Activated B cell treated with CpG ODN at 0.5 μM for 24 hours (primary cell): ENCODE measurements at regions of chr14 and their contacts with region 1.

Region 1: GRCh38 chr14:68268197-68268596 is 448.6 kb downstream of the RAD51B start:
- DNase-seq: no peak
- ATAC-seq: peak; percentile 67
- H3K4me3 Mint-ChIP-seq: peak overlapping the region; percentile 63
- H3K27ac Mint-ChIP-seq: peak overlapping the region; percentile 93
- H3K4me1 Mint-ChIP-seq: peaks cover 93% of the 10 kb centered on the region
- H3K27me3 Mint-ChIP-seq: no peaks in the 10 kb centered on the region
- CTCF ChIP-seq: no peak

Region 2: DNA sequence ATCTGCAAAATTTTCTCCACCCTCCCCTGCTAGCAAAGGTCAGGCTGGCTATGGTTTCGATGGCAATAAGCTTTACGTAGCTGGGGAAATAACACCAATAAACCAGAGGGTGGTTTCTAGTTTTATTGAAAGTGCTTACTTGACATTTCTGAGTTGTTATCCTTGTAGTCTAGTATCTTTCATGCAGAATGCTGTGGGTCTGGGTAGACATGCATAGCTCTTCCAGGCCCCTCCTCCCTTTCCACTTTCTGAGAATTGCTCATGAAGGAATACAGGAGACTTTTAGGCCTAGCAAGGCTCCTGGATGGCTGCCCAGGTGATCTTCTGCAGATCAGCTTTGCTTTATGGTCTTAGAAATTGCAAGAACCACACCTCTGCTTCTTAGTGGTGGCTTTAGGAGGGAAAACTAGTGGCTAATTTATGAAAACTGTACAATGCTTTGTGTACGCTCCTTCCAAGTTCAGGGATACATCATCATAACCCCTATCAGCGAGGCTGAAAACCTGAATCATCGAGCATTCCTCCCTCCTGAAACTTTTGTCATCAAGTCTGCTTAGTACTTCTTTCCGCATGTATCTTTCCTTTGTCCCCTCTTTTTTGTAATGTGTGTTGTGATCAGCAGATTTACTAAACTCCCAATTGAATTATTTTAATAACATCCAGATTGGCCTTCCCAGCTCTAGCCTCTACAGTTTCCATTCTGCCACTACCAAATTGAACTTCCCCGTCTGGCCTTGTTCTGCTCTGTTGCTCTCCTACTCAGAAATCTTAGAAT is 24.4 kb after region 1 on chr14:
- CTCF ChIA-PET with region 1: no interaction called
- POLR2A ChIA-PET with region 1: interaction called, 375 read pairs
- intact Hi-C with region 1: no loop called
- DNase-seq: no peak
- ATAC-seq: peak; percentile 35
- H3K4me3 Mint-ChIP-seq: peak overlapping the region; percentile 59
- H3K27ac Mint-ChIP-seq: peak overlapping the region; percentile 96
- H3K4me1 Mint-ChIP-seq: peaks cover 77% of the 10 kb centered on the region
- H3K27me3 Mint-ChIP-seq: no peaks in the 10 kb centered on the region
- CTCF ChIP-seq: no peak

Region 3: GRCh38 chr14:68328509-68328908 is 60.3 kb after region 1 on chr14:
- CTCF ChIA-PET with region 1: no interaction called
- POLR2A ChIA-PET with region 1: interaction called, 9 read pairs
- intact Hi-C with region 1: loop called (anchors 5 kb)
- DNase-seq: no peak
- ATAC-seq: no peak
- H3K4me3 Mint-ChIP-seq: no peak overlapping the region
- H3K27ac Mint-ChIP-seq: peak overlapping the region; percentile 13
- H3K4me1 Mint-ChIP-seq: peaks cover 63% of the 10 kb centered on the region
- H3K27me3 Mint-ChIP-seq: no peaks in the 10 kb centered on the region
- CTCF ChIP-seq: no peak

Region 4: DNA sequence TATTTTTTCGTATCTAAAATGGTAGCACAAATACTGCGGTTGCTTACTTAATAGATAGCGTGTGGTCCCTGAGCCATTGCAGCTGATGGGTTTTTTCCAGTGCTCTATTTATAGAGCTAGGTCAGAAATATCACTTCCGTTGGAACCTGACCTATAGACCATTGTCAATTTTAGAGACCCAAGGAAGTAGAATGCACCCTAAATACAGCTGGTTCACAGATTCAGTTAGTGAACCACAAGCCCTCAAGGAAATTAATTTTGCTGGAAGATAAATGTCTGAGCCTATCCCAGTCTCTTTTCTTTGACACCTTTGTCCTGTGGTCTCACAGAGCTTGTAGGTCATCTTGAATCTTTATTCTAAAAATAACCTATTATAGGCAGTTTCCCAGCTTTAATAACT is 133.7 kb after region 1 on chr14:
- CTCF ChIA-PET with region 1: interaction called, 4 read pairs
- POLR2A ChIA-PET with region 1: interaction called, 59 read pairs
- intact Hi-C with region 1: loop called (anchors 1 kb)
- DNase-seq: no peak
- ATAC-seq: peak; percentile 59
- H3K4me3 Mint-ChIP-seq: peak overlapping the region; percentile 72
- H3K27ac Mint-ChIP-seq: peak overlapping the region; percentile 92
- H3K4me1 Mint-ChIP-seq: peaks cover 92% of the 10 kb centered on the region
- H3K27me3 Mint-ChIP-seq: no peaks in the 10 kb centered on the region
- CTCF ChIP-seq: no peak

Region 5: DNA sequence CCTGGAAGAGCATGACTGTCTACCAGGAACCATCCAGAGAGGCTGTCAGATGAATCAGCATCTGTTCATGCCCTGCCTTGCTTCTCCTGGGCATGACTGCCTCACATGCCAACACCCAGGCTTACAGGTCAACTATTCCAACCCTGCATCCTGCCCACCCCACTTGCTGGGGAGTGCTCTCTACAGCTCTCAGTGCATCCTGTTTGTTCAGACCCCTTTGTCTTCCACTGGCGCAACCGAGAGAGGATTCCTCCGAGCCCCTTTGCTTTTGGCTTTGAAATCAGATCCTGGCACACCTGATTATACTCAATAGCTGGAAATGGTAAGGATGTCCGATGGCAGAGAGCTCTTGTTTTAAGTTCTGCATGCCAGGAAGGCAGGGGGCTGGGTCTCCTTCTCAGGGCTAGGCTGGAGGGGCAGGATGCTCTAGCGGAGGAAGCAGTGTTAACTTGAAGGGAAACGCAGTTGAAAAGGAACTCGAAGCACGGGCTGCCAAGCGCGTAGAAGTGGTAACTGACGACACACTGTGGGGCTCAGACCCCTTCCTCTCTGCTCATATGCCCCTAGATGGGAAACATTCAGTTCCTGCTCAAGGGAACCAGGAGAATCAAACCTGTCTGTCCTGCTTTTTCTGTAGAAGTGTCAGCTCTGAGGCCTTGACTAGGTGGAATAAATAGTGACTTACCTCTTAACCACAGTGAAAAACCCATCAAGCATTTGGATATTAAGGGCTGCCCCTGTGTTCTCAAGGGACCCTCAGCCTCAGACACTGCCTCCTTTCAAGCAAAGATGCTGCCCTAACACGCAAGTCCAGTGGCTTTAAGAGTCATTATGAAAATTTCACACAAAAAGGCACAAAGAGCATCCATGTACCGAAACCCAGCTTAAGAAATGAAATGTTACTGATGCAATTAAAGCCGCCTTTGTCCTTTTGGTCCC is 227.2 kb after region 1 on chr14:
- CTCF ChIA-PET with region 1: no interaction called
- POLR2A ChIA-PET with region 1: interaction called, 16 read pairs
- intact Hi-C with region 1: no loop called
- DNase-seq: no peak
- ATAC-seq: peak; percentile 92
- H3K4me3 Mint-ChIP-seq: peak overlapping the region; percentile 64
- H3K27ac Mint-ChIP-seq: peak overlapping the region; percentile 98
- H3K4me1 Mint-ChIP-seq: peaks cover 84% of the 10 kb centered on the region
- H3K27me3 Mint-ChIP-seq: no peaks in the 10 kb centered on the region
- CTCF ChIP-seq: no peak

Region 6: GRCh38 chr14:68741839-68742470 is 473.8 kb after region 1 on chr14:
- CTCF ChIA-PET with region 1: no interaction called
- POLR2A ChIA-PET with region 1: interaction called, 10 read pairs
- intact Hi-C with region 1: no loop called
- DNase-seq: peak; percentile 65
- ATAC-seq: peak; percentile 89
- H3K4me3 Mint-ChIP-seq: peak overlapping the region; percentile 32
- H3K27ac Mint-ChIP-seq: peak overlapping the region; percentile 86
- H3K4me1 Mint-ChIP-seq: peaks cover 54% of the 10 kb centered on the region
- H3K27me3 Mint-ChIP-seq: no peaks in the 10 kb centered on the region
- CTCF ChIP-seq: no peak